ENCODE measurements at regions of chr9 and their contacts with region 1.

Region 1: GRCh38 chr9:124202447-124202971 is 55.2 kb upstream of the NEK6 start:
- DNase-seq: peak; percentile 91
- ATAC-seq: peak; percentile 90
- H3K4me3 ChIP-seq: peak overlapping the region in 2 of 5 experiments; percentile 7 to 34
- H3K4me3 Mint-ChIP-seq: peak overlapping the region; percentile 80
- H3K27ac ChIP-seq: peak overlapping the region; percentile 66 to 69
- H3K27ac Mint-ChIP-seq: peak overlapping the region; percentile 98
- H3K4me1 ChIP-seq: peaks cover 86 to 97% of the 10 kb centered on the region in 2 donors
- H3K4me1 Mint-ChIP-seq: peaks cover 85% of the 10 kb centered on the region
- H3K27me3 ChIP-seq: no peaks in the 10 kb centered on the region
- H3K27me3 Mint-ChIP-seq: no peaks in the 10 kb centered on the region
- CTCF ChIP-seq: peak; percentile 10

Region 2: GRCh38 chr9:124239249-124240073 is 37.0 kb after region 1 on chr9:
- CTCF ChIA-PET with region 1: interaction called, 6 read pairs
- POLR2A ChIA-PET with region 1: interaction called, 3 read pairs
- intact Hi-C with region 1: loop called (anchors 1 kb)
- DNase-seq: peak; percentile 82
- ATAC-seq: peak; percentile 98
- H3K4me3 ChIP-seq: peak overlapping the region in 1 of 5 experiments; percentile 22
- H3K4me3 Mint-ChIP-seq: peak overlapping the region; percentile 38
- H3K27ac ChIP-seq: peak overlapping the region in 1 of 2 donors; percentile 40
- H3K27ac Mint-ChIP-seq: peak overlapping the region; percentile 85
- H3K4me1 ChIP-seq: peaks cover 25 to 37% of the 10 kb centered on the region in 2 donors
- H3K4me1 Mint-ChIP-seq: peaks cover 47% of the 10 kb centered on the region
- H3K27me3 ChIP-seq: no peaks in the 10 kb centered on the region
- H3K27me3 Mint-ChIP-seq: no peaks in the 10 kb centered on the region
- CTCF ChIP-seq: no peak

Region 3: GRCh38 chr9:124257844-124258606 is 55.5 kb after region 1 on chr9 and contains the start of gene NEK6:
- CTCF ChIA-PET with region 1: interaction called, 3 read pairs
- POLR2A ChIA-PET with region 1: interaction called, 5 read pairs
- intact Hi-C with region 1: loop called (anchors 1 kb)
- DNase-seq: peak; percentile 75
- ATAC-seq: peak; percentile 60
- H3K4me3 ChIP-seq: peak within 1 kb of the TSS; percentile 65 to 97 (median 81)
- H3K4me3 Mint-ChIP-seq: peak within 1 kb of the TSS; percentile 100
- H3K27ac ChIP-seq: peak within 1 kb of the TSS; percentile 49 to 71
- H3K27ac Mint-ChIP-seq: peak within 1 kb of the TSS; percentile 98
- H3K4me1 ChIP-seq: peaks cover 42 to 67% of the 10 kb centered on the region in 2 donors
- H3K4me1 Mint-ChIP-seq: peaks cover 71% of the 10 kb centered on the region
- H3K27me3 ChIP-seq: no peaks in the 10 kb centered on the region
- H3K27me3 Mint-ChIP-seq: no peaks in the 10 kb centered on the region
- CTCF ChIP-seq: no peak
- total RNA-seq, gene NEK6: 63.1 and 66.3 TPM in 2 replicates

Region 4: DNA sequence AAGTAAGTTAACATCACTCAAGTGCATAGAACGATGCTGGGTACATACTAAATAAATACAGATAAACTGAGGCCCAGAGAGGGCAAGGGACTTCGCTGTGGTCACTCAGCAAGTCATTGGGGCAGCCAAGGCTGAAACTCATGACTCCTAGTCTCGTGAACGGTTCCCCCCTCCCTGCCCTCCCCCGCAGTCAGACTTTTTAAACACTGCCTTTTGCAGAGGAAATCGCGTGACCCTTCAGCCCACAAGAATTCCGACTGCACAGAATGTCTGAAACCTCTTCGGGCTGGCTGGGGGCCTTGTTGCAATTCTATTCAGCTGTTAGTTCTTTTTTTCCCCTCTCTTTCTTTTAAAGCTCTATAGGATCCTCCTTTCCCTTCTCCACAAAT is 83.4 kb after region 1 on chr9:
- CTCF ChIA-PET with region 1: interaction called, 11 read pairs
- POLR2A ChIA-PET with region 1: interaction called, 7 read pairs
- intact Hi-C with region 1: loop called (anchors 1 kb)
- DNase-seq: peak; percentile 85
- ATAC-seq: peak; percentile 42
- H3K4me3 ChIP-seq: peak overlapping the region in 2 of 5 experiments; percentile 7 to 48
- H3K4me3 Mint-ChIP-seq: peak overlapping the region; percentile 84
- H3K27ac ChIP-seq: peak overlapping the region; percentile 73 to 86
- H3K27ac Mint-ChIP-seq: peak overlapping the region; percentile 96
- H3K4me1 ChIP-seq: peaks cover 63 to 88% of the 10 kb centered on the region in 2 donors
- H3K4me1 Mint-ChIP-seq: peaks cover 87% of the 10 kb centered on the region
- H3K27me3 ChIP-seq: no peaks in the 10 kb centered on the region
- H3K27me3 Mint-ChIP-seq: no peaks in the 10 kb centered on the region
- CTCF ChIP-seq: no peak

Measured in B cell (primary cell).